Naive thymus-derived CD8-positive, alpha-beta T cell (primary cell): ENCODE measurements at regions of chr9 and their contacts with region 1.

Region 1: DNA sequence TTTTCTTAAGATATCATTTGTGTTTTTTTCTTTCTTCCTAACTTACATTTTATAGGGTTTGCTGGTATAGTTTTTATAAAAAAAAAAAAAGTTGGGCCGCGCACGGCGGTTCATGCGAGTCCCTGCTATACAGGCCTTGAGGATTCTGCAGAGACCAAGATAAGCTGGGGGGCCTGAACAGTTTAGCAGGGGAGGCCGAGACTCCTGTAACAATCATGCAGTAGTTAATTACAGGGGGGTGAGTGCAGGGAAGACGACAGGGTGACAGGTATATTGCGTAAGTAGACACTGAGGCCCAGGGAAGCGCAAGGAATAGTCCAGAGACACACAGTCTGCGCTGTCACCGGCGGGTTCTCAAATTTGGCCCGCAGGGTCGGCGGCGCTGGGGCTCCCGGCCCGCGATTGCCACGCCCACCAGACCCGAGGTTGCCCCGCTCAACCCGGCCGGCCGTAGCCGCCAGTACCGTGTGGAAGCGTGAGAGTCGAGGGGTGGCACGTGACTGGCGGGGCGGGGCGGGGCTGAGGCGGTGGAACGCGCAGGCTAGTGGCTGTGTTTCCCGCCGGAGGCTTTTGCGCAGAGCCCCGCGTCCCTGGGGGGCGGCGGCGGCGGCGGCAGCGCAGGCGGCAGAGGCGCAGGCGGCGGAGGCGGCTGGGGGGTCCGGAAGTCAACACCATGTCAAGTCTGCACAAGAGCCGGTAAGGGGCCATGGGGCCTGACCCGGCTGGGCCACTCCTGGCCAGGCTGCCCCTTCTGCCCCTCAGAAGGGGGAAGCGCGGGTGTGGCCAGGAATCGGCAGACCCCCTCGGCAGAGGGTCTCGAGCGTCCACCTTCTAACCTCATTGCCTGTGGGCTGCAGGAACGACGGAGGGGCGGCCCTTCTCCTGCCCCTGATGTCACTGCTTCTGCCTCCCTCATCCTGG is at the start of gene TBC1D13:
- DNase-seq: peak; percentile 87 to 95 (median 92)
- ATAC-seq: peak; percentile 94 to 96
- H3K4me3 Mint-ChIP-seq: peak within 1 kb of the TSS; percentile 91 to 98 (median 94)
- H3K27ac Mint-ChIP-seq: peak within 1 kb of the TSS; percentile 91 to 99 (median 97)
- H3K4me1 Mint-ChIP-seq: peaks cover 6 to 27% (median 23%) of the 10 kb centered on the region in 4 donors
- H3K27me3 Mint-ChIP-seq: peaks cover 0 to 1% (median 0%) of the 10 kb centered on the region in 5 donors
- polyA plus RNA-seq, gene TBC1D13: 20.2 to 34.8 (median 22.2) TPM

Region 2: DNA sequence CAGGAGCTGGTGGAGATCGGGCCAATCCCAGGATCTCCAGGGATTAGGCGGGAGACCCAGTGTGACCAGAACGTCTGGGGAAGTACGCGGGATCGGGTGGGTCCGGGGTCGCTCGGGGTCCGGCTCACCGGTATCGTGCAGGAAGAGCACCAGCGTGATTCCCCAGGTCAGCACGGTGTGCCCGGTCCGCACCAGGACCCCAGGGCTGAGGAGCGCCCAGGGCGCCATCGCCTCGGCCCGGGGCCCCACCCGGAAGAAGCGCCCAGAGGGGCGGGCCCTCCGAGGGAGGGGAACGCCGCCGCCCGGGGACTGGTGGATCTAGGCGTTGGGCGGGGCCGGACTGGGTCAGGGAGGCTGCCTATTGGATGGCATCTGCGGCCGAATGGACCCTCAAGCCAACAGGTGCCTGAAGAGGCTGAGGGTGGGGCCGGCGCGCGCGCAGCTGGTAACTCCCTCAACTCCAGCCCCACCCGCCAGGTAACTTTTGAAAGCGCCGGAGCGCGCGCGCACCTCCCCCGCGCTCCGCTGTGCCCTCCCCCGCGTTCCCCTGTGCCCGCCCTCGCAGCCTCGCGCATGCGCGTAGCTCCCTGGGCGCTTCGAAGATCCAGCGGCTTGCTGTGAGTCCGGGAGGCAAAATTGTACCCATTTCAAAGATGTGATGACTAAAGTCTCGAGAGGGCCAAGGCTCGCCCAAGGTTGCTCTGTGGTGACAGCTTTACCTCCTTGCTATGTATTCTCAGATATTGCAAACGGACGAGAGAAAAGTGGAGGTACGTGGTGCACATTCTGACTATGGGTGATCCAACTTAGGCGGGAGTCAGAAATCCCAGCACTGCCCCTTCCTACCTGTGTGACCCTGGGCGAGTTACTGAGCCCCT is 62.8 kb before region 1 on chr9 and contains the start of gene ZDHHC12:
- POLR2A ChIA-PET with region 1: interaction called, 11 read pairs
- DNase-seq: peak; percentile 97 to 100 (median 99)
- ATAC-seq: peak; percentile 98
- H3K4me3 Mint-ChIP-seq: peak within 1 kb of the TSS; percentile 85 to 95 (median 92)
- H3K27ac Mint-ChIP-seq: peak within 1 kb of the TSS; percentile 91 to 99 (median 94)
- H3K4me1 Mint-ChIP-seq: peaks cover 22 to 48% (median 38%) of the 10 kb centered on the region in 4 donors
- H3K27me3 Mint-ChIP-seq: no peaks in the 10 kb centered on the region
- polyA plus RNA-seq, gene ZDHHC12: 51.7 to 75.5 (median 64.3) TPM

Region 3: GRCh38 chr9:128771745-128772519 is 15.0 kb before region 1 on chr9 and contains the start of gene ZER1:
- POLR2A ChIA-PET with region 1: interaction called, 50 read pairs
- DNase-seq: peak; percentile 88 to 96 (median 94)
- ATAC-seq: peak; percentile 89 to 91
- H3K4me3 Mint-ChIP-seq: peak within 1 kb of the TSS; percentile 94 to 99 (median 97)
- H3K27ac Mint-ChIP-seq: peak within 1 kb of the TSS; percentile 90 to 100 (median 99)
- H3K4me1 Mint-ChIP-seq: peaks cover 20 to 43% (median 34%) of the 10 kb centered on the region in 4 donors
- H3K27me3 Mint-ChIP-seq: no peaks in the 10 kb centered on the region
- polyA plus RNA-seq, gene ZER1: 34.7 to 46.9 (median 45.7) TPM

Region 4: DNA sequence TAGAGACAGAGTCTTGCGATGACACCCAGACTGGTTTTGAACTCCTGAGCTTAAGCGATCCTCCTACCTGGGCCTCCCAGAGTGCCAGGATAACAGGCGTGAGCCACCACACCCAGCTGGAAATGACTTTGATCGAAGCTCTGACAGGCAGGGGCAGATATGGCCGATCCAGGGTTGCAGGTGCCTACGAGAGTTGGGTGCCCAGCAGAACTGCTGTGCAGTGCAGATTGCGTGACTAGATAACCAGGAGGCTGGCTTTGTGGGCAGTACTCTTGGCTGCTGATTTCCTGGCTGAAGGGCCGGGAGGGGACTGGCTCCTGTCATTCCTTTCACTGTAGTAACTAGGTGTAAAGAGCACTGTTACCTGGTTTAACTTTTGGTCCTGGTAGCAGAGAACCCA is 12.0 kb after region 1 on chr9:
- POLR2A ChIA-PET with region 1: no interaction called
- DNase-seq: no peak
- ATAC-seq: no peak
- H3K4me3 Mint-ChIP-seq: no peak overlapping the region
- H3K27ac Mint-ChIP-seq: no peak overlapping the region
- H3K4me1 Mint-ChIP-seq: peaks cover 0 to 2% (median 1%) of the 10 kb centered on the region in 4 donors
- H3K27me3 Mint-ChIP-seq: no peaks in the 10 kb centered on the region